Endothelial cell of umbilical vein (primary cell): ENCODE measurements at regions of chr9 and their contacts with region 1.

Region 1: DNA sequence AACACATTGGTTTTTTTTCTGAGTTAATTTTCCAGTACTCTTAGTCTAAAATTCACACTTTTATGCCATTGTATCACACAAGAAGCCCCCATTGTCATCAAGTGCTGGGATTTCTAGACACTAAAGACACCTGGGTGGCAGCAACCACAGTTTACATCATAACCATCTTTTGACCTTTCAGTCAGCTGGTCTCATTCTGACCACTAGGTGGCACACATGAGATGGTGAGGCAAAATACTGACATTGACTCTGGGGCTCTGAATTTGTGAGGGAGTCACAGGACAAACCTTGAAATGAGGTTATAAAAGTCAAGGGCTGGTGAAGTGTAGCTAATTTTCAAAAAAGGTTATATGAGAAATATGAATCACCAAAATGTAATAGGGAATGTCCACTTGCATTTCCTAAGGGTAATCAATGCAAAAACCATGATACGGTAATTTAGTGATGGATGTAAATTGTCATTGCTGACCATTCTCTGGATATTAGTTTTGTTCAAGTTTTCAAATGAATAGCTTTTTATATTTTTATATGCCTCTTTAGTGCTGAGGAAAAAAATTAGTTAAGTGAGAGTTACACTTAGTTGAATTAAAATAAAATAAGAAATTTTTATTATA is 229.4 kb downstream of the DMAC1 start:
- DNase-seq: peak; percentile 58
- H3K4me3 ChIP-seq: no peak overlapping the region
- H3K27ac ChIP-seq: no peak overlapping the region
- H3K4me1 ChIP-seq: no peaks in the 10 kb centered on the region
- H3K27me3 ChIP-seq: no peaks in the 10 kb centered on the region
- CTCF ChIP-seq: peak; percentile 79
- POLR2A ChIP-seq: no peak

Region 2: DNA sequence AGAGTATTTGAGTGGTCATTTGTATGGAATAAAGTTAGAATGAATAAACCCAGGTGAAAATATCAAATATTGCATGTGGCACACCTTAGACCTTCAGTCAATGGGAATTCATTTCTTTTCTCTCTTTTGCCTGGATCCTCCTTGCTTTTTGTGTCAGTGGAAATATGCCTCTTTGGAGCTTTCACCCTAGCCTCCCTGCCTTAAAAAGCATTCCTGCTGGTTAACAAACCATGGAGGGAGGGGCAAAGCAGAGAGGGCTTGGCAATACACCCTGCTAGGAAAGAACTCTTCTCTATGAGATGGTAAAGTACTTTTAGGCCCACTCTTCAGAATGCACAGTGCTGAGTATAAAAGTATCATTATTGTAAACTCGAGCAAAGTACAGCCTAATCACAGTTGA is 154.4 kb before region 1 on chr9:
- CTCF ChIA-PET with region 1: no interaction called
- POLR2A ChIA-PET with region 1: no interaction called
- dilution Hi-C with region 1: no loop called
- intact Hi-C with region 1: no loop called
- DNase-seq: no peak
- H3K4me3 ChIP-seq: no peak overlapping the region
- H3K27ac ChIP-seq: no peak overlapping the region
- H3K4me1 ChIP-seq: no peaks in the 10 kb centered on the region
- H3K27me3 ChIP-seq: no peaks in the 10 kb centered on the region
- CTCF ChIP-seq: no peak
- POLR2A ChIP-seq: no peak

Region 3: DNA sequence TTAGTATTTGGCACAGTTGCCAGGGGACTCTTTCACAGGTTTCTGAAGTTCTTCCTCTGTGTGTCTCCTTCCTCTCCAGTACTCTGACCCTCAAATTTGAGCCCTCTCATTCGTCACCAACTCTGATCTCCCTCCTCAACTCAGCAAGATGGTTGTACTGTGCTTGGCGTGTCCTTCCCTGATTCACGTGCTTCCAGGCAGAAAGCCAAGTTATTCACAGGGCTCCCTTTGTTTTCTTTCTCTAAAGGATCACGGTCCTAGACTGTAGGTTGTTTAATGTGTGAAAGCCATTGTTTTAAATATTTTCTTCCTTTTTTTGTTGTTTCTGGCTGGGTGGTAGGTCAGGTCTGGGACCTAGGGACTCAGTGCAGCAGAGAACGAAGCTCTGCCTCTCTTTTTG is 86.4 kb after region 1 on chr9:
- CTCF ChIA-PET with region 1: interaction called, 10 read pairs
- POLR2A ChIA-PET with region 1: no interaction called
- dilution Hi-C with region 1: no loop called
- intact Hi-C with region 1: loop called (anchors 1 kb)
- DNase-seq: peak; percentile 93
- H3K4me3 ChIP-seq: no peak overlapping the region
- H3K27ac ChIP-seq: peak overlapping the region; percentile 42
- H3K4me1 ChIP-seq: peaks cover 32% of the 10 kb centered on the region
- H3K27me3 ChIP-seq: no peaks in the 10 kb centered on the region
- CTCF ChIP-seq: no peak
- POLR2A ChIP-seq: no peak

Region 4: DNA sequence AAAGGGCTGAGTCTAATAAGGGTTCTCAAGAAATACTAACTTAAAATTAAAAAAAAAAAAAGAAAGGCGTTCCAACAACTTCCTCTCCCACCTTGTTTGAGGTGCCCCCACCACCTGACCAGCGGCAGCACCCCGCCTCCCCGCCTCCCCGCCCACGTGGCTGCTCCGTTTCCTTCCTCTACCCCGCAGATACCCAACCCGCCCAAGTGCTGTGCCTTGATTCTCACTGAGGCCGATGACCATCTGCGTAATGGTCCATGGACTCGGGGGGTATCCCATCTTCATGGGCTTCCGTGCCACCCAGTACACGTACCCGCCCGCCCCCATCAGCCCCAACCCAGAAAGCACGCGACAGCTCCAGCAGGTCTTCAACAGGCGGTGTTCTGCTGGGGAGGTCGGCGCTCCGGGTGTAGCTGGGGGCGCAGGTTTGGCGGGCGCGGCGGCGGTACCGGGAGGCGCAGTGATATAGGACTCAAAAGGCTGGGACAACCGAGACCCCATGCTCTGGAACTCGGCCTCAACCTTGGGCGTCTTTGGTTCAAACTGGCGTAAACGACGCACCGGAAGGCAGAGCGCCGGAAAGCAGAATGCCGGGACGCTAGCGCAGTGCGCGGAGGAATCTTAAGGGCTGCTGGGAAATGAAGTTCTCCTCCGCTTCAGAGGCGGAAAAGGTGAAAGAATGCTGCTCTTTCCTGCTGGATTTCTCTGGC is 229.2 kb after region 1 on chr9 and contains the start of gene DMAC1:
- CTCF ChIA-PET with region 1: no interaction called
- POLR2A ChIA-PET with region 1: no interaction called
- dilution Hi-C with region 1: no loop called
- intact Hi-C with region 1: loop called (anchors 5 kb)
- DNase-seq: peak; percentile 78
- H3K4me3 ChIP-seq: peak within 1 kb of the TSS; percentile 65 to 99 (median 84)
- H3K27ac ChIP-seq: peak within 1 kb of the TSS; percentile 60
- H3K4me1 ChIP-seq: peaks cover 6% of the 10 kb centered on the region
- H3K27me3 ChIP-seq: no peaks in the 10 kb centered on the region
- CTCF ChIP-seq: no peak
- POLR2A ChIP-seq: peak; percentile 20
- total RNA-seq, gene DMAC1: 44.0 and 49.6 TPM in 2 replicates

Region 5: DNA sequence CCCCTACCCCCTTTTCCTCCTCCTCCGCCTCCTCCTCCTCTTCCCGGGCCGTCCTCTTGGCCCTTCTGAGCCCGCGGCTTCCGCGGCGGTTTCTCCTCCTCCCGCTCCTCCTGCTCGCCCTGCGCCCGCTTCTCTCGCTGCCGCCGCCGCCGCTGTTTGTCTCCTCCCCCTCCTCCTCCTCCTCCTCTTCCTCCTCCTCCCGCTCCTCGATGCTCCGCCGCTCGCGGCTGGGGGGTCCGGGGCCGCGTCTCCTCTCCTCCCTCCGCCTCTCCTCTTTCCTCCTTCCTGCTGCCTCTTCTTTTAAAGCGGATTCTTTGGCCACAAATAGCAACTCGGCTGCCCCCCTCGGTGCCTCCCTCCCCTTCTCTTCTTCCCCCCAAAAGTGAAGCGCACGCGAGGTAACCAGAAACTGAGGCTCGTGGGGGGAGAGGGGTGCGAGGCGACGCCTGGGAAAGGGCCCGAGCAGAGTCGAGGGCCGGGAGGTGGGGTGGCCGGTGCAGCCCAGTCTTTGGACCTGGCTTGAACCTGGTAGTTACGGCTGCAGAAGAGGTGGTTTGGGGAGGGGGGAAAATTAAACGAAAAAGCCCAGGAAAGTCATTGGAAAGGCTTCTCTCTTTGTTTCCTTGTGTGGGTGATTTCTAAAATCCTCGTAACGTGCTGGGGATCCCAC is 1287.8 kb after region 1 on chr9:
- CTCF ChIA-PET with region 1: no interaction called
- POLR2A ChIA-PET with region 1: no interaction called
- dilution Hi-C with region 1: no loop called
- intact Hi-C with region 1: loop called (anchors 1 kb)
- DNase-seq: peak; percentile 21
- H3K4me3 ChIP-seq: peak overlapping the region; percentile 52 to 62 (median 59)
- H3K27ac ChIP-seq: no peak overlapping the region
- H3K4me1 ChIP-seq: peaks cover 4% of the 10 kb centered on the region
- H3K27me3 ChIP-seq: peaks cover 13 to 22% of the 10 kb centered on the region in 2 experiments
- CTCF ChIP-seq: no peak
- POLR2A ChIP-seq: no peak

Region 6: DNA sequence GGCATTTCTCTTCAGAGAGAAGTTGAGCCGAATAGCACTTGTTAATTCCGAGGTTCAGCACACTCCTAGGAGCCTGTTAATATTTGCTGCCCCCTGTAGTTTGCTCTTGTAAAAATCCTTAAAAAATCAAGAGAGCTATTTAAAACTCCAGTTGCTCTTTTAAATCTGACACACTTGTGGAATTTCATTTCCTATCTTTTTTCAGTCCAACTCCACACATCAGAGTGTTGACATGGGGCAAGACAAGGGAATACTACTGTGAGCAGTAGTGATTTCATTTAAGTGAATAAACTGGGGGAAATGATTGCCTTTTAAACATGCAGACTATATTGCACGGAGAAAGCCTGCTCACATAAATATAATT is 1325.6 kb after region 1 on chr9:
- CTCF ChIA-PET with region 1: interaction called, 40 read pairs
- POLR2A ChIA-PET with region 1: no interaction called
- dilution Hi-C with region 1: no loop called
- intact Hi-C with region 1: loop called (anchors 1 kb)
- DNase-seq: peak; percentile 47
- H3K4me3 ChIP-seq: no peak overlapping the region
- H3K27ac ChIP-seq: no peak overlapping the region
- H3K4me1 ChIP-seq: no peaks in the 10 kb centered on the region
- H3K27me3 ChIP-seq: no peaks in the 10 kb centered on the region
- CTCF ChIP-seq: peak; percentile 14 to 26
- POLR2A ChIP-seq: no peak

Region 7: DNA sequence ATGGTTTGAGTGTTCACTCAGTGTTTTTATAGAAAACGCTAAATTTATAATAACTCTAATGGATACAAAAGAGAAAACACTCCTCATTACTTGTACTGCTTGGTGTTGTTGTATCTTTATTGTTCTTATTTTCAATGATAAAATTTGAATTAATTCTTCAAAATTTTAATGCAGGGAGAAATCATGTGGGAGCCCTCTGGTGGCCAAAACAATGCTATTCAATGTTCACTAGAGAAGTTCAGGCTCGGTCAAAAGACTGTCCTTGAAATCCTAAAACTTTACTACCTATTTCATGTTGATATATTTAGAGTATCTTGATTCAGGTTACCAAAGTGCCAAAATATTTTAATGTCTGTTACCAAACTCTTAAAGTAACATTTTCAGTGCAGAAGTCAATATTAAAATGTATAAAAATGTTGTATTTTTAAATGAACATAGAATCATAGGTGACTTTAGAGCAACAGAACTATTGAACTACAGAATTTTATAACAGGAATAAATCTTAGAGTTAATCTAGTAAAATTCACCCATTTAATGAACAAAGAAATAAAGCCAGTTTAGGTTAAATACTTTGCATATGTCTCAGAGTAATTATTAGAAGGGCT is 1782.8 kb after region 1 on chr9:
- CTCF ChIA-PET with region 1: no interaction called
- POLR2A ChIA-PET with region 1: no interaction called
- dilution Hi-C with region 1: no loop called
- intact Hi-C with region 1: loop called (anchors 1 kb)
- DNase-seq: peak; percentile 1
- H3K4me3 ChIP-seq: no peak overlapping the region
- H3K27ac ChIP-seq: no peak overlapping the region
- H3K4me1 ChIP-seq: no peaks in the 10 kb centered on the region
- H3K27me3 ChIP-seq: no peaks in the 10 kb centered on the region
- CTCF ChIP-seq: peak; percentile 40 to 42
- POLR2A ChIP-seq: no peak